HEK293 (cell line): ENCODE measurements at regions of chr9 and their contacts with region 1.

Region 1: GRCh38 chr9:100505564-100506159 is 32.7 kb downstream of the TMEFF1 start:
- H3K4me3 ChIP-seq: no peak overlapping the region
- H3K27ac ChIP-seq: no peak overlapping the region
- H3K4me1 ChIP-seq: no peaks in the 10 kb centered on the region
- CTCF ChIP-seq: no peak

Region 2: DNA sequence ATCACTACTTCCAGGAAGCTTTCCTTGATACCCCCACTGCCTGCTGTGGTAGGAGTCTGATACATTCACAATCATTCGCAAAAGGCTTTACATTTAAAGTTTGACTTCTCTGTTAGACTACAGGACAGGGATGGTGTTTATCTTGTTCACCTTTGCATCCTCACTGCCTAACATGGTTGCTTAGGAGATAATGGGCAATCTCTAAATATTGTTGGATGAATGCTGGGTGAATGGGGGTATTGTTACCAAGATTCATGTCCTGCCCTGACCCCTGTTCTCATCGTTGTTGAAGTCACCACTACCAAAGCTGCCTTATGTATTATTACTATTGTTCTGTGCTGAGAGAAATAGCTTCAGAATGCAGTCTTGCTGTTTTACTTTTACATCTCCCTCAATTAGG is 40.4 kb before region 1 on chr9:
- CTCF ChIA-PET with region 1: no interaction called
- POLR2A ChIA-PET with region 1: no interaction called
- H3K4me3 ChIP-seq: no peak overlapping the region
- H3K27ac ChIP-seq: no peak overlapping the region
- H3K4me1 ChIP-seq: peaks cover 4% of the 10 kb centered on the region; the same call in 1 of the 2 replicates
- CTCF ChIP-seq: no peak

Region 3: DNA sequence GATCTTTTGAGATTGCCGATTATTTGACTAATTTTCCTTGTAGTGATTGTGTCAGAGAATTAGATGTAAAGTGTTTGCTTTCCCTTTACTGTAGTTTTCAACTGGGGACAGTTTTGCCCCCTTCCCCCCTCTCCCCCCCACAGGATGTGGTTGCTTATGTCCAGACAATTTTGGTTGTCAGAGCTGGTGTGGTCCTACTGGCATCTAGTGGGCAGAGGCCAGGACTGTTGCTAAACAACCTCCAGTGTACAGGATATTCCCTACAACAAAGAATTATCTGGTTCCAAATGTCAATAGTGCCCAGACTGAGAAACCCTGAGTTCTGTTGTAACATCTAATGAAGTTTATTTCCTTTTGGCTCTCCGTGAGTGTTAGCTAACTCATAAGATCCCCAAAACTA is 12.7 kb before region 1 on chr9:
- CTCF ChIA-PET with region 1: interaction called, 12 read pairs
- POLR2A ChIA-PET with region 1: no interaction called
- H3K4me3 ChIP-seq: no peak overlapping the region
- H3K27ac ChIP-seq: no peak overlapping the region
- H3K4me1 ChIP-seq: no peaks in the 10 kb centered on the region
- CTCF ChIP-seq: no peak

Region 4: GRCh38 chr9:100590481-100590880 is 84.8 kb after region 1 on chr9:
- CTCF ChIA-PET with region 1: interaction called, 22 read pairs
- POLR2A ChIA-PET with region 1: no interaction called
- H3K4me3 ChIP-seq: no peak overlapping the region
- H3K27ac ChIP-seq: no peak overlapping the region
- H3K4me1 ChIP-seq: no peaks in the 10 kb centered on the region
- CTCF ChIP-seq: no peak

Region 5: GRCh38 chr9:100595391-100596199 is 89.9 kb after region 1 on chr9:
- CTCF ChIA-PET with region 1: interaction called, 22 read pairs
- POLR2A ChIA-PET with region 1: no interaction called
- H3K4me3 ChIP-seq: no peak overlapping the region
- H3K27ac ChIP-seq: no peak overlapping the region
- H3K4me1 ChIP-seq: no peaks in the 10 kb centered on the region; the same call in 1 of the 2 replicates
- CTCF ChIP-seq: peak; percentile 39